CD4-positive, alpha-beta T cell (primary cell): ENCODE measurements at regions of chr19 and their contacts with region 1.

Region 1: DNA sequence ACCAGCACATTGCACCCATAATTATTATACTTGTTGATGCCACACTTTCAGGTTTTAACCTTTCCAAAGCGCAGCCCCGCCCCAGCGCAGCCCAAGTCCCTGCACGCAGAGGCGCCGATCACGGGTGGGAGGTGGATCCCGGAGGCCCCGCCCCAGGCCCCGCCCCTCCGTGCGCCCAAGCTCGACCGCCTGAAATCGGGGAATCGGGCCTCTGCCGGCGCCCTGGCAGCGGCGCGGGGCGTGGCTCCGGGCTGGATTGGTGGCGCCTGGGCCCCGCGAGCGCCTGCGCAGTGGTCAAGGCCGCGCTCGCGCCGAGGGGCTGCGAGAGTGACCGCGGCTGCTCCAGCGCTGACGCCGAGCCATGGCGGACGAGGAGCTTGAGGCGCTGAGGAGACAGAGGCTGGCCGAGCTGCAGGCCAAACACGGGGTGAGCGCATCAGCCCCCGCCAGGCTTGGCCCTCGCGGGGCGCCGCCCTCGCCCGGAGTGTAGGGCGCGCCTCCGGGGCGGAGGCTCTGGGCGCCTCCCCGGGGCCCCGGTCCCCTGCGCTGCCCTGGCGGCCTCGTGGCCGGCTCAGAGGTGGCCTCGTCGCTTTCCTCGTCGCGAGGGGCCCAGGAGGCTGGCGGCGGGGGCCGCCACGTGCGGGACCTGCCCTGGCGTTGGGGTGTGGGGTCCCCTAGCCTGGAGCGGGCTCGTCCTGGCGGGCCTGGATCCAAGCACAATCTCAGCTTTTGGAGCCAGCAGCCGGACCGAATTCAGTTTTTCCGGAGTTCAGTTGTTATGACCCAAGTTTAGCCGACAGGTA is at the start of gene PDCD5:
- DNase-seq: peak; percentile 94 to 99 (median 97)
- ATAC-seq: peak; percentile 90
- H3K4me3 ChIP-seq: peak within 1 kb of the TSS; percentile 80
- H3K4me3 Mint-ChIP-seq: peak within 1 kb of the TSS; percentile 91
- H3K27ac ChIP-seq: peak within 1 kb of the TSS; percentile 40 to 57
- H3K27ac Mint-ChIP-seq: peak within 1 kb of the TSS; percentile 88
- H3K4me1 ChIP-seq: peaks cover 26% of the 10 kb centered on the region
- H3K4me1 Mint-ChIP-seq: peaks cover 41% of the 10 kb centered on the region
- H3K27me3 ChIP-seq: peaks cover 0 to 5% of the 10 kb centered on the region in 2 experiments
- H3K27me3 Mint-ChIP-seq: no peaks in the 10 kb centered on the region
- CTCF ChIP-seq: no peak
- total RNA-seq, gene PDCD5: 30.0 to 32.7 TPM

Region 2: DNA sequence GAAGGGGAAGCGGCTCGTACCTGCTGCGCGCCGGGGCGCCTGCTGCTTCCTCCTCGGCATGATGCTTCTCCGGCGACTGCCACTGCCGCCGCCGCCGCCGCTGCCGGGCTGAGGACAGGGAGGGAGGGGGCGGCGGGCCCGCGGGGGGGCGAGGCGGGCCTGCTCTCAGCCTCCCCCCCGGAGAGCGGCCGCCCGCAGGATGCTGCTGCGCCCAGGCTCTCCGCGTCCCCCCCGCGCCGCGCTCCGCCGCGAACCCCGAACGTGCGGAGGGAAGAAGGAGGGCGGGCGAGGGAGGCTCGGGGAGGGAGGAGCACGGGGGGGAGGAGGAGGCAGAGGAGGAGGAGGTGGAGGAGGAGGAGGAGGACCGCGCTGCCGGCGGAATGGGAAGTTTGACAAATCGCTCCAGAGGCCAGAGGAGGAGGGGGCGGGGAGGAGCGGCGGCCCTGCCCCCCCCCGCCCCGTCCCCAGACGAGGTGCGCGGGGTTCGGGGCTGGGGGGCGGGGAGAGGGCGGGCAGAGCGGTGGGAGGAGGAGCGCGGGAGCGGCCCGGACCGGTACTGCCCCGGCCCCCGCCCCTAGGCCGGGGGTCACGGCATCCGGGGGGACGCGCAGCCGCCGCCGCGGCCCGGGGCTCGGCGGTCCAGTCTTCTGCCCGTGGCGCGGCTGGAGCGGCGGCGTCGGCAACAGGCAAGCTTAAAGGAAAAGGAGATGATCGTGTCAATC is 1231.8 kb before region 1 on chr19 and contains the start of gene TSHZ3:
- CTCF ChIA-PET with region 1: no interaction called
- POLR2A ChIA-PET with region 1: no interaction called
- intact Hi-C with region 1: loop called in 1 of 2 experiments (anchors 5 kb)
- DNase-seq: peak in 9 of 14 experiments; percentile 13 to 72 (median 43)
- ATAC-seq: peak; percentile 50
- H3K4me3 ChIP-seq: peak within 1 kb of the TSS; percentile 63
- H3K4me3 Mint-ChIP-seq: peak within 1 kb of the TSS; percentile 90
- H3K27ac ChIP-seq: no peak within 1 kb of the TSS
- H3K27ac Mint-ChIP-seq: no peak within 1 kb of the TSS
- H3K4me1 ChIP-seq: peaks cover 50% of the 10 kb centered on the region
- H3K4me1 Mint-ChIP-seq: peaks cover 41% of the 10 kb centered on the region
- H3K27me3 ChIP-seq: peaks cover 67 to 82% of the 10 kb centered on the region in 2 experiments
- H3K27me3 Mint-ChIP-seq: peaks cover 74% of the 10 kb centered on the region
- CTCF ChIP-seq: no peak
- total RNA-seq, gene TSHZ3: 0.38 to 0.61 TPM

Region 3: GRCh38 chr19:32067685-32068084 is 513.4 kb before region 1 on chr19:
- CTCF ChIA-PET with region 1: no interaction called
- POLR2A ChIA-PET with region 1: no interaction called
- intact Hi-C with region 1: no loop called
- DNase-seq: no peak
- ATAC-seq: no peak
- H3K4me3 ChIP-seq: no peak overlapping the region
- H3K4me3 Mint-ChIP-seq: no peak overlapping the region
- H3K27ac ChIP-seq: no peak overlapping the region
- H3K27ac Mint-ChIP-seq: no peak overlapping the region
- H3K4me1 ChIP-seq: no peaks in the 10 kb centered on the region
- H3K4me1 Mint-ChIP-seq: no peaks in the 10 kb centered on the region
- H3K27me3 ChIP-seq: no peaks in the 10 kb centered on the region
- H3K27me3 Mint-ChIP-seq: no peaks in the 10 kb centered on the region
- CTCF ChIP-seq: no peak

Region 4: DNA sequence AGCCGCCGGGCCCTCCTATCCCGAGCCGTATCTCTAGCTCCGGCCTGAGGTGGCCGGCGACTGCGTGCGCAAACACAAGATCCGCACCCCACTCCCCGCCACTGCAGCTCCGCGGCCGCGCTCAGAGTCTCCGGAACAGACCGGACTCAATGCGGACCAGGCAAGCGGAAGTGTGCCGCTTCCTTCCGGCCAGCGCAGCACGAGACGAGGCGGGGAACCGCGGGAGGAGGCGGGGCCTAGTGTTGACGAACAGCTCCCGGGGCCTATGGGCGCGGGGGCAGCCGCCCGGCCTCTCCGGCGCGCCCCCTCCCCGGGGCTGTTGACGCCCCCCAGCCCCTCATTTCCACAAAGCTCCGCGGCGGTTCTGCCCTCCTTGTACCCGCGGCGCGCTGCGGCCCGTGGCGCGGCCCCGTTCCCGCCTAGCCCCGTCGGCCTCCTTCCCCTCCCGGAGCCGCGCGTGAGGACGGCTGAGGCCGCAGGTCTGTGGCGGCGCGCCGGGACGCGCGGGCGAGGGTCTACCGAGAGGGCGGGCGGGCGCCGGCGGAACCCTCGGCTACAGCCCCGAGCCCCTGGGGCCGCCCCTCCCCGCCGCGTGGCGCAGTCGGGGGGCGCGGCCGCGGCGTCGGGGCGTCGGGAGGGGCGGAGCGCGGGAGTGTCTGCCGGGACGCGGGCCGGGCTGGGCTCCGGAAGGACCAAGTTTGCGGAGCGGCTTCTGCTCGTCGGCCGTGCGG is 175.5 kb before region 1 on chr19 and contains the start of gene DPY19L3:
- CTCF ChIA-PET with region 1: no interaction called
- POLR2A ChIA-PET with region 1: interaction called, 12 read pairs
- intact Hi-C with region 1: loop called in 1 of 2 experiments (anchors 1 kb)
- DNase-seq: peak; percentile 77 to 93 (median 85)
- ATAC-seq: peak; percentile 88
- H3K4me3 ChIP-seq: peak within 1 kb of the TSS; percentile 76
- H3K4me3 Mint-ChIP-seq: peak within 1 kb of the TSS; percentile 89
- H3K27ac ChIP-seq: peak within 1 kb of the TSS; percentile 72 to 80
- H3K27ac Mint-ChIP-seq: peak within 1 kb of the TSS; percentile 91
- H3K4me1 ChIP-seq: peaks cover 19% of the 10 kb centered on the region
- H3K4me1 Mint-ChIP-seq: peaks cover 30% of the 10 kb centered on the region
- H3K27me3 ChIP-seq: no peaks in the 10 kb centered on the region
- H3K27me3 Mint-ChIP-seq: no peaks in the 10 kb centered on the region
- CTCF ChIP-seq: no peak
- total RNA-seq, gene DPY19L3: 7.3 to 8.5 TPM

Region 5: DNA sequence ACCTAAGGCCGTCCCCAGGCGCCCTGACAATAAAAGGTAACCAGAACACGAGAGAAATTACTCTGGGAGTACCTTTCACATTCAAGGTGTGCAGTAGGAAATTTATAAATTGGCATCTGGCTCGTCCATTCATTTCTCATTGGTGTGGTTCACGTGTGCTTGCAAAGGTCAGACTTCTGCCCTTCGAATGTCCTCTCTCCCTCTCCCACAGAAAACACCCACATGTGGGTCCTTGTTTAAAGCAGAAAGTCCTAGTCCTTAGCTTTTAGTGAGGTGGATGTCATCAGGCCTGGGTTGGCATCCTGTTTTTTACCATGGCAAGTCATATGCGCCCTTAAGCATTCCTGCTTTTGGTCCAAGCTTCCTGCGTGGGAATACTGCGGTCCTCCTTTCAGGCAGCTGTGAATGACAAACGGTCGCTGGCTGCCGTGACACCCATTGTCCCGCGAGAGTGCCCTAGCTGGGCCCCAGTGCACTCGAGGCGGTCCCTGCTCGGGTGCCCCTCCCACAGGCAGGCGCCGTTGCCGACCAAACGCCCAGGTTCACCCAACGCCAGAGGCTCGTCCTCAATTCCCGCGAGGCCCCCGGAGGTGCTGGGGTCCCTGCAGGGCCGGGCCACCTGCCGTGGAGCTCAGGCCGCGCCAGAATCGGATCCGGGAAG is 110.3 kb after region 1 on chr19 and contains the start of gene NUDT19:
- CTCF ChIA-PET with region 1: no interaction called
- POLR2A ChIA-PET with region 1: interaction called, 6 read pairs
- intact Hi-C with region 1: loop called in 1 of 2 experiments (anchors 5 kb)
- DNase-seq: peak; percentile 50 to 86 (median 72)
- ATAC-seq: peak; percentile 77
- H3K4me3 ChIP-seq: peak within 1 kb of the TSS; percentile 65
- H3K4me3 Mint-ChIP-seq: peak within 1 kb of the TSS; percentile 96
- H3K27ac ChIP-seq: peak within 1 kb of the TSS; percentile 31 to 55
- H3K27ac Mint-ChIP-seq: peak within 1 kb of the TSS; percentile 80
- H3K4me1 ChIP-seq: peaks cover 44% of the 10 kb centered on the region
- H3K4me1 Mint-ChIP-seq: peaks cover 51% of the 10 kb centered on the region
- H3K27me3 ChIP-seq: no peaks in the 10 kb centered on the region
- H3K27me3 Mint-ChIP-seq: no peaks in the 10 kb centered on the region
- CTCF ChIP-seq: no peak
- total RNA-seq, gene NUDT19: 7.9 to 8.2 TPM

Region 6: GRCh38 chr19:32971715-32972540 is 390.8 kb after region 1 on chr19 and contains the starts of genes CEP89 and FAAP24:
- CTCF ChIA-PET with region 1: no interaction called
- POLR2A ChIA-PET with region 1: interaction called, 4 read pairs
- intact Hi-C with region 1: loop called in 1 of 2 experiments (anchors 10 kb)
- DNase-seq: peak; percentile 95 to 100 (median 98)
- ATAC-seq: peak; percentile 99
- H3K4me3 ChIP-seq: peak within 1 kb of the TSS; percentile 60
- H3K4me3 Mint-ChIP-seq: peak within 1 kb of the TSS; percentile 96
- H3K27ac ChIP-seq: peak within 1 kb of the TSS; percentile 55 to 76
- H3K27ac Mint-ChIP-seq: peak within 1 kb of the TSS; percentile 79
- H3K4me1 ChIP-seq: peaks cover 23% of the 10 kb centered on the region
- H3K4me1 Mint-ChIP-seq: peaks cover 22% of the 10 kb centered on the region
- H3K27me3 ChIP-seq: no peaks in the 10 kb centered on the region
- H3K27me3 Mint-ChIP-seq: no peaks in the 10 kb centered on the region
- CTCF ChIP-seq: no peak
- total RNA-seq, gene CEP89: 4.0 to 5.1 TPM
- total RNA-seq, gene FAAP24: 0.91 to 1.4 TPM

Region 7: DNA sequence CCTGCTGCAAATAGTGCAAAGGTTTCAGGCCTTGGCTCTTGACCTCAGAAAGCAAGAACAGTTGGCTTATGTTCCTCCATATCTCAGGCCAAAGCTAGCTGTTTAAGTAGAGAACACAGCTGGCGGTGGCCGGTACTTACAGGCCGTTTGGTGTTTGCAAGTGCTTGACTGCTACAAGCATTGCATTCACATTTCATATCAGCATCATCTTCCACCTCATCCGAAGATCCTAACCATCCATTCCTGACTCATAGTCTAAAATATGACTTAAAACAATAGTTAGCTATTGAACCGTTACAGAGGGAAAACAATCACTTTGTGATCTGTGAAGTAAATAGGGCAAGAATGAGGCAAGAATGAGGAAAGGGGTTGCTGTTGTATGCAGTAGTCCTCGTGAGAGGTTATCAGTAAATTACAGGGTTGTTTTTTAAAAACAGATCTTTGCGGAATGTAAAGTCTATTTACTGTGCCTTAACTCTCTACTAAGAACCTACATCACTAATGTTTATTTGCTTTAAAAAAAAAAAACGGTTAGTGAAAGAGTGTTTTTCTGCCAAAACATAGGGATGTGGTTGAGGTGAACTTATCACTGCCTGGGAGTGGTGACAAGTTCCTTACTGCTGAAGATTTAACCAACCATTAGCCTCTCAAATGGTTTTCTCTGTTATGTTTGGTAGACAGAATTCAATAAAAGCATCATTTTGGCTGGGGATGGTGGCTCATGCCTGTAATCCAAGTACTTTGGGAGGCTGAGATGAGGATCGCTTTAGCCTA is 529.2 kb after region 1 on chr19:
- CTCF ChIA-PET with region 1: no interaction called
- POLR2A ChIA-PET with region 1: no interaction called
- intact Hi-C with region 1: loop called in 1 of 2 experiments (anchors 10 kb)
- DNase-seq: no peak
- ATAC-seq: no peak
- H3K4me3 ChIP-seq: no peak overlapping the region
- H3K4me3 Mint-ChIP-seq: no peak overlapping the region
- H3K27ac ChIP-seq: no peak overlapping the region
- H3K27ac Mint-ChIP-seq: no peak overlapping the region
- H3K4me1 ChIP-seq: no peaks in the 10 kb centered on the region
- H3K4me1 Mint-ChIP-seq: no peaks in the 10 kb centered on the region
- H3K27me3 ChIP-seq: no peaks in the 10 kb centered on the region
- H3K27me3 Mint-ChIP-seq: no peaks in the 10 kb centered on the region
- CTCF ChIP-seq: no peak

Region 8: DNA sequence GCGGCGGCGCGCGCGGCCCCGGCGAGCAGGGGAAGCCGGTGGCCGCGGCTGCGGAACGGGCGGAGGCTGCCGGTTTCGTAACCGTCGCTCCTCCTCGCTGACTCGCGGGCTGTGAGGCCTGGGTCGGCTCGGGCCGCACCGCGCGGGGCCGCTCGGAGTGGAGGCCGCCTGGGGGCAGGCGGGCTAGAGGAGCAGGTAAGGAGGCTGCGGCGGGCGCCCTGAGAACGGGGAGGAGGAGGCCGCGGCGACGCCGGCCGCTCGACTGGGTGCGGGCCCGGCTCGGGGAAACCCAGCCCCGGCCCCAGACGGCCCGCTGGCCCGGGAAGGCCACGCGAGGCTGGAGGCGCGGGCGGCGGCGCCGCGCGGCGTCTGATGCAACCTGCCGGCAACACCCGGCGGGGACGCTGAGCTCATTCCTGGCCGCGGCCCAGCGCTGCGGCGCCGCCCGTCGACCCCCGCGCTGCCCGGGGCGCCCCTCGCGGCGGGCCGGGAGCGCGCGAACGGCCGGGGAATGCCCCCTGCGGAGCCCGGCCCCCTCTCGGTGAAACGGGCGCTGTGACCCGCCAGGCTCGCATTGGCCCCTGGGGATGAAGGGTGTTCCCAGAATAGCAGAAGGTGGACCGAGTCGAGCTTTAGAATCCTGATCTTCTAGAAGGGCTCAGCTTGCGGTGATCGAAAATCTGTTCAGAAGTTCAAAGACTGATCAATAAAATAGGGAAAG is 792.8 kb after region 1 on chr19 and contains the start of gene CEBPG:
- CTCF ChIA-PET with region 1: no interaction called
- POLR2A ChIA-PET with region 1: no interaction called
- intact Hi-C with region 1: loop called in 1 of 2 experiments (anchors 5 kb)
- DNase-seq: peak in 11 of 14 experiments; percentile 18 to 88 (median 58)
- ATAC-seq: peak; percentile 27
- H3K4me3 ChIP-seq: peak within 1 kb of the TSS; percentile 97
- H3K4me3 Mint-ChIP-seq: peak within 1 kb of the TSS; percentile 93
- H3K27ac ChIP-seq: peak within 1 kb of the TSS; percentile 86 to 91
- H3K27ac Mint-ChIP-seq: peak within 1 kb of the TSS; percentile 89
- H3K4me1 ChIP-seq: peaks cover 40% of the 10 kb centered on the region
- H3K4me1 Mint-ChIP-seq: peaks cover 51% of the 10 kb centered on the region
- H3K27me3 ChIP-seq: no peaks in the 10 kb centered on the region
- H3K27me3 Mint-ChIP-seq: no peaks in the 10 kb centered on the region
- CTCF ChIP-seq: peak; percentile 32
- total RNA-seq, gene CEBPG: 15.5 TPM